Naive thymus-derived CD4-positive, alpha-beta T cell (primary cell): ENCODE measurements at regions of chrX and their contacts with region 1.

Region 1: GRCh38 chrX:154411322-154411980 is at the start of gene TAFAZZIN:
- DNase-seq: peak; percentile 48 to 79 (median 73)
- ATAC-seq: peak; percentile 83
- H3K4me3 ChIP-seq: peak within 1 kb of the TSS; percentile 67
- H3K4me3 Mint-ChIP-seq: peak within 1 kb of the TSS; percentile 85 to 97 (median 90)
- H3K27ac ChIP-seq: peak within 1 kb of the TSS; percentile 79
- H3K27ac Mint-ChIP-seq: peak within 1 kb of the TSS; percentile 90 to 97 (median 94)
- H3K4me1 ChIP-seq: peaks cover 6 to 7% of the 10 kb centered on the region in 2 donors
- H3K4me1 Mint-ChIP-seq: peaks cover 9 to 22% (median 14%) of the 10 kb centered on the region in 7 donors
- H3K27me3 ChIP-seq: no peaks in the 10 kb centered on the region
- H3K27me3 Mint-ChIP-seq: no peaks in the 10 kb centered on the region
- total RNA-seq, gene TAFAZZIN: 90.9 to 130 (median 108) TPM

Region 2: DNA sequence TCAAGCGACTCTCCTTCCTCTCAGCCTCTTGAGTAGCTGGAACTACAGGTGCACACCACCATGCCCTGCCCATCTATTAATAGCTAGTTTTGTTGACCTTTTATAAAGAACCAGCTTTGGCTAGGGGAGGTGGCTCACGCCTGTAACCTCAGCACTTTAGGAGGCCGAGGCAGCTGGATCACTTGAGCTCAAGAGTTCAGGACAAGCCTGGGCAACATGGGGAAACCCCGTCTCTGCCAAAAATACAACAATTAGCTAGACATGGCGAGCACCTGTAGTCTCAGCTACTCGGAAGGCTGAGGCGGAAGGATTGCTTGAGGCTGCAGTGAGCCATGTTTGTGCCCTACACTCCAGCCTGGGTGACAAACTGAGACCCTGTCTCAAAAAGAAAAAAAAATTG is 113.1 kb before region 1 on chrX:
- CTCF ChIA-PET with region 1: no interaction called
- POLR2A ChIA-PET with region 1: no interaction called
- intact Hi-C with region 1: no loop called
- DNase-seq: no peak
- ATAC-seq: no peak
- H3K4me3 ChIP-seq: no peak overlapping the region
- H3K4me3 Mint-ChIP-seq: no peak overlapping the region
- H3K27ac ChIP-seq: no peak overlapping the region
- H3K27ac Mint-ChIP-seq: no peak overlapping the region
- H3K4me1 ChIP-seq: no peaks in the 10 kb centered on the region
- H3K4me1 Mint-ChIP-seq: peaks cover 0 to 3% (median 0%) of the 10 kb centered on the region in 7 donors
- H3K27me3 ChIP-seq: no peaks in the 10 kb centered on the region
- H3K27me3 Mint-ChIP-seq: peaks cover 0 to 2% (median 0%) of the 10 kb centered on the region in 5 donors

Region 3: DNA sequence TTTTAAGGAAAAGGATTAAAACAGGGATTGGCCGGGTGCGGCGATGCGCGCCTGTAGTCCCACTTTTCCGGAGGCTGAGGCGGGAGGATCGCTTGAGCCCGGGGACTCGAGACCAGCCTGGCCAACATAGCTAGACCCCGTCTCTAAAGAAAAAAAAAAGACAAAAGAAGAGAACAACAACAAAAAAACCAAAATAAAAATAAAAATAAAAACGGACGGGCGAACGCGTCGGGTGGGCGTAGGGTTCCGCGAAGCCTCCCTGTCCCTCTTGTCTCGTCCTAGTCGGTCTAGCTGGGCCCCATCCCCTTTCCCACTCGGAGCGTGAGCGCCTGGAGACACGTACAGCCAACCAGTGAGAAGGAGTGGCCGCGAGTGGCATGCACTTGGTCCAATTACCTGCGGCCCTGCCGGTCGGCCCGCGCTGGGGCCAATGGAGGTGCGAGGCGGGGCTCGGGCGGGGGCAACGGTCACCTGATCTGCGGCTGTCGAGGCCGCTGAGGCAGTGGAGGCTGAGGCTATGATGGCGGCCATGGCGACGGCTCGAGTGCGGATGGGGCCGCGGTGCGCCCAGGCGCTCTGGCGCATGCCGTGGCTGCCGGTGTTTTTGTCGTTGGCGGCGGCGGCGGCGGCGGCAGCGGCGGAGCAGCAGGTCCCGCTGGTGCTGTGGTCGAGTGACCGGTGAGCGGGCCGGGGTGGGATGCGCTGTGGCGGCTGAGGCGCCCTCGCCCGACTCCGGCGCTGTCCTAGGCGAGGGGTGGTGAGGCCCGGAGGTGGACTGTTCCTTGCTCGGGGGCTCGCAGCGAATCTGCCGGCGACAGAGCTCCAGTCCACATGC is 16.9 kb after region 1 on chrX and contains the start of gene ATP6AP1:
- CTCF ChIA-PET with region 1: no interaction called
- POLR2A ChIA-PET with region 1: interaction called, 15 read pairs
- intact Hi-C with region 1: loop called (anchors 1 kb)
- DNase-seq: peak; percentile 72 to 90 (median 85)
- ATAC-seq: peak; percentile 98
- H3K4me3 ChIP-seq: peak within 1 kb of the TSS; percentile 55
- H3K4me3 Mint-ChIP-seq: peak within 1 kb of the TSS; percentile 77 to 86 (median 82)
- H3K27ac ChIP-seq: peak within 1 kb of the TSS; percentile 81
- H3K27ac Mint-ChIP-seq: peak within 1 kb of the TSS; percentile 76 to 91 (median 82)
- H3K4me1 ChIP-seq: peaks cover 0 to 4% of the 10 kb centered on the region in 2 donors
- H3K4me1 Mint-ChIP-seq: peaks cover 7 to 40% (median 25%) of the 10 kb centered on the region in 7 donors
- H3K27me3 ChIP-seq: no peaks in the 10 kb centered on the region
- H3K27me3 Mint-ChIP-seq: no peaks in the 10 kb centered on the region
- total RNA-seq, gene ATP6AP1: 37.8 to 63.3 (median 51.1) TPM

Region 4: GRCh38 chrX:154436983-154437719 is 25.7 kb after region 1 on chrX and contains the start of gene GDI1:
- CTCF ChIA-PET with region 1: no interaction called
- POLR2A ChIA-PET with region 1: interaction called, 3 read pairs
- intact Hi-C with region 1: loop called in 1 of 2 experiments (anchors 1 kb)
- DNase-seq: peak; percentile 39 to 72 (median 62)
- ATAC-seq: peak; percentile 82
- H3K4me3 ChIP-seq: peak within 1 kb of the TSS; percentile 48
- H3K4me3 Mint-ChIP-seq: peak within 1 kb of the TSS; percentile 75 to 90 (median 86)
- H3K27ac ChIP-seq: peak within 1 kb of the TSS; percentile 85
- H3K27ac Mint-ChIP-seq: peak within 1 kb of the TSS; percentile 82 to 97 (median 91)
- H3K4me1 ChIP-seq: no peaks in the 10 kb centered on the region
- H3K4me1 Mint-ChIP-seq: peaks cover 0 to 36% (median 17%) of the 10 kb centered on the region in 7 donors
- H3K27me3 ChIP-seq: no peaks in the 10 kb centered on the region
- H3K27me3 Mint-ChIP-seq: no peaks in the 10 kb centered on the region
- total RNA-seq, gene GDI1: 106 to 174 (median 140) TPM

Region 5: GRCh38 chrX:154458114-154458953 is 46.9 kb after region 1 on chrX and contains the start of gene PLXNA3:
- CTCF ChIA-PET with region 1: interaction called, 3 read pairs
- POLR2A ChIA-PET with region 1: interaction called, 4 read pairs
- intact Hi-C with region 1: loop called in 1 of 2 experiments (anchors 2 kb)
- DNase-seq: peak; percentile 40 to 74 (median 68)
- ATAC-seq: peak; percentile 90
- H3K4me3 ChIP-seq: peak within 1 kb of the TSS; percentile 45
- H3K4me3 Mint-ChIP-seq: peak within 1 kb of the TSS; percentile 79 to 97 (median 94)
- H3K27ac ChIP-seq: peak within 1 kb of the TSS; percentile 70
- H3K27ac Mint-ChIP-seq: peak within 1 kb of the TSS; percentile 86 to 98 (median 94)
- H3K4me1 ChIP-seq: peaks cover 0 to 3% of the 10 kb centered on the region in 2 donors
- H3K4me1 Mint-ChIP-seq: peaks cover 4 to 16% (median 9%) of the 10 kb centered on the region in 7 donors
- H3K27me3 ChIP-seq: no peaks in the 10 kb centered on the region
- H3K27me3 Mint-ChIP-seq: no peaks in the 10 kb centered on the region
- total RNA-seq, gene PLXNA3: 32.9 to 45.7 (median 43.3) TPM